GM12878 (cell line): ENCODE measurements at regions of chr3 and their contacts with region 1.

Region 1: GRCh38 chr3:181709537-181710279 is 2.0 kb upstream of the SOX2 start:
- DNase-seq: no peak
- ATAC-seq: peak; percentile 81
- H3K4me3 ChIP-seq: no peak overlapping the region
- H3K27ac ChIP-seq: no peak overlapping the region
- H3K4me1 ChIP-seq: no peaks in the 10 kb centered on the region
- H3K27me3 ChIP-seq: peaks cover 3 to 20% of the 10 kb centered on the region in 2 experiments
- CTCF ChIP-seq: peak; percentile 50 to 78 (median 63)
- EP300 ChIP-seq: no peak
- POLR2A ChIP-seq: no peak
- RAD21 ChIP-seq: peak; percentile 85

Region 2: GRCh38 chr3:182258538-182259177 is 549.0 kb after region 1 on chr3:
- CTCF ChIA-PET with region 1: no interaction called
- POLR2A ChIA-PET with region 1: no interaction called
- RAD21 ChIA-PET with region 1: no interaction called
- SMC1A ChIA-PET with region 1: no interaction called
- in situ Hi-C with region 1: loop called (anchors 10 kb)
- intact Hi-C with region 1: loop called (anchors 1 kb)
- DNase-seq: no peak
- ATAC-seq: peak; percentile 55; the same call in 2 of the 3 replicates
- H3K4me3 ChIP-seq: no peak overlapping the region
- H3K27ac ChIP-seq: no peak overlapping the region
- H3K4me1 ChIP-seq: no peaks in the 10 kb centered on the region
- H3K27me3 ChIP-seq: no peaks in the 10 kb centered on the region; a peak in 1 of 4 replicates
- CTCF ChIP-seq: peak; percentile 36 to 57 (median 38); a peak in 4 of 6 replicates
- EP300 ChIP-seq: no peak
- POLR2A ChIP-seq: no peak
- RAD21 ChIP-seq: peak; percentile 96

Region 3: GRCh38 chr3:182490596-182491491 is 781.1 kb after region 1 on chr3:
- CTCF ChIA-PET with region 1: no interaction called
- POLR2A ChIA-PET with region 1: no interaction called
- RAD21 ChIA-PET with region 1: no interaction called
- SMC1A ChIA-PET with region 1: no interaction called
- in situ Hi-C with region 1: no loop called
- intact Hi-C with region 1: loop called (anchors 2 kb)
- DNase-seq: no peak
- ATAC-seq: peak; percentile 65
- H3K4me3 ChIP-seq: no peak overlapping the region
- H3K27ac ChIP-seq: no peak overlapping the region
- H3K4me1 ChIP-seq: no peaks in the 10 kb centered on the region
- H3K27me3 ChIP-seq: no peaks in the 10 kb centered on the region; a peak in 1 of 4 replicates
- CTCF ChIP-seq: peak; percentile 30 to 51 (median 33); a peak in 4 of 6 replicates
- EP300 ChIP-seq: no peak
- POLR2A ChIP-seq: no peak
- RAD21 ChIP-seq: peak; percentile 30

Region 4: GRCh38 chr3:182618085-182618732 is 908.5 kb after region 1 on chr3:
- CTCF ChIA-PET with region 1: interaction called, 12 read pairs
- POLR2A ChIA-PET with region 1: no interaction called
- RAD21 ChIA-PET with region 1: no interaction called
- SMC1A ChIA-PET with region 1: interaction called, 4 read pairs
- in situ Hi-C with region 1: loop called (anchors 5 kb)
- intact Hi-C with region 1: loop called (anchors 2 kb)
- DNase-seq: no peak
- ATAC-seq: peak; percentile 76
- H3K4me3 ChIP-seq: no peak overlapping the region
- H3K27ac ChIP-seq: no peak overlapping the region
- H3K4me1 ChIP-seq: no peaks in the 10 kb centered on the region
- H3K27me3 ChIP-seq: no peaks in the 10 kb centered on the region; a peak in 1 of 4 replicates
- CTCF ChIP-seq: peak; percentile 57 to 75 (median 65)
- EP300 ChIP-seq: no peak
- POLR2A ChIP-seq: no peak
- RAD21 ChIP-seq: peak; percentile 89